GM12878 (cell line): ENCODE measurements at regions of chr7 and their contacts with region 1.

Region 1: GRCh38 chr7:135274495-135275268 is 41.0 kb downstream of the STRA8 start:
- DNase-seq: peak; percentile 45
- ATAC-seq: peak; percentile 98
- H3K4me3 ChIP-seq: no peak overlapping the region
- H3K27ac ChIP-seq: no peak overlapping the region
- H3K4me1 ChIP-seq: no peaks in the 10 kb centered on the region
- H3K27me3 ChIP-seq: no peaks in the 10 kb centered on the region
- CTCF ChIP-seq: peak; percentile 75 to 86 (median 81); a peak in 5 of 6 replicates
- EP300 ChIP-seq: no peak
- POLR2A ChIP-seq: no peak
- RAD21 ChIP-seq: peak; percentile 81

Region 2: GRCh38 chr7:134548877-134549276 is 725.8 kb before region 1 on chr7 and contains the start of gene AKR1B15:
- CTCF ChIA-PET with region 1: no interaction called
- POLR2A ChIA-PET with region 1: no interaction called
- RAD21 ChIA-PET with region 1: no interaction called
- SMC1A ChIA-PET with region 1: no interaction called
- in situ Hi-C with region 1: no loop called
- intact Hi-C with region 1: no loop called
- DNase-seq: peak; percentile 62
- ATAC-seq: peak; percentile 94
- H3K4me3 ChIP-seq: no peak within 1 kb of the TSS
- H3K27ac ChIP-seq: no peak within 1 kb of the TSS
- H3K4me1 ChIP-seq: peaks cover 21% of the 10 kb centered on the region
- H3K27me3 ChIP-seq: no peaks in the 10 kb centered on the region
- CTCF ChIP-seq: no peak; a peak in 1 of 6 replicates
- EP300 ChIP-seq: peak in 1 of 2 experiments; percentile 42; a peak in 1 of 4 replicates
- POLR2A ChIP-seq: no peak
- RAD21 ChIP-seq: no peak
- polyA plus RNA-seq, gene AKR1B15: not detected

Region 3: GRCh38 chr7:135175929-135176328 is 98.8 kb before region 1 on chr7:
- CTCF ChIA-PET with region 1: interaction called, 11 read pairs
- POLR2A ChIA-PET with region 1: no interaction called
- RAD21 ChIA-PET with region 1: interaction called, 7 read pairs
- SMC1A ChIA-PET with region 1: interaction called, 12 read pairs
- in situ Hi-C with region 1: no loop called
- intact Hi-C with region 1: no loop called
- DNase-seq: no peak
- ATAC-seq: no peak; the same call in 2 of the 3 replicates
- H3K4me3 ChIP-seq: peak overlapping the region; percentile 51
- H3K27ac ChIP-seq: no peak overlapping the region
- H3K4me1 ChIP-seq: peaks cover 5% of the 10 kb centered on the region
- H3K27me3 ChIP-seq: no peaks in the 10 kb centered on the region
- CTCF ChIP-seq: no peak
- EP300 ChIP-seq: no peak
- POLR2A ChIP-seq: no peak
- RAD21 ChIP-seq: no peak

Region 4: DNA sequence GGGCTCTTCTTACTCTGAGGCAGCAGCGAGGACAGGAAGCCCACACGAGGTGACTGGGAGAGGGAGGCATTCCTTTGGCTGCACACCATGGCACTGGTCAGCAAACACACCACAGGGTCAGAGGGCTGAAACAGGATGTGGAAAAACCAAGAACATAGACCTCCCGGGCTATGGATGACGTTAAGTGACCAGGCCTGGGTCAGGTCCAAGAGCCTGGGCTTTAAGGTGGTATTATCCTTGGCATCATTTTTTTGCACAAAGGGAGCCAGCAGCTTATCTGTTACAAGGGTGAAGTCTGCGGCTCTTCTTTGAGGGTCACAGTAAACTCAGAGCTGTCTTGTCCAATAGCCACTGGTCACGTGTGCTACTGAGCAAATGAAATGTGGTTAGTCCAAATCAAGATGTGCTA is 70.3 kb before region 1 on chr7:
- CTCF ChIA-PET with region 1: interaction called, 11 read pairs
- POLR2A ChIA-PET with region 1: no interaction called
- RAD21 ChIA-PET with region 1: interaction called, 3 read pairs
- SMC1A ChIA-PET with region 1: interaction called, 8 read pairs
- in situ Hi-C with region 1: no loop called
- intact Hi-C with region 1: no loop called
- DNase-seq: no peak
- ATAC-seq: no peak
- H3K4me3 ChIP-seq: no peak overlapping the region
- H3K27ac ChIP-seq: 0 out of 2 replicates have a peak overlapping the region, but pooled peaks have one; percentile 37
- H3K4me1 ChIP-seq: peaks cover 40% of the 10 kb centered on the region
- H3K27me3 ChIP-seq: no peaks in the 10 kb centered on the region
- CTCF ChIP-seq: no peak
- EP300 ChIP-seq: no peak
- POLR2A ChIP-seq: no peak
- RAD21 ChIP-seq: no peak

Region 5: GRCh38 chr7:135253898-135254771 is 20.5 kb before region 1 on chr7:
- CTCF ChIA-PET with region 1: interaction called, 72 read pairs
- POLR2A ChIA-PET with region 1: no interaction called
- RAD21 ChIA-PET with region 1: interaction called, 4 read pairs
- SMC1A ChIA-PET with region 1: interaction called, 8 read pairs
- in situ Hi-C with region 1: no loop called
- intact Hi-C with region 1: no loop called
- DNase-seq: no peak
- ATAC-seq: no peak
- H3K4me3 ChIP-seq: no peak overlapping the region
- H3K27ac ChIP-seq: no peak overlapping the region
- H3K4me1 ChIP-seq: peaks cover 9% of the 10 kb centered on the region; the same call in 1 of the 2 replicates
- H3K27me3 ChIP-seq: no peaks in the 10 kb centered on the region
- CTCF ChIP-seq: no peak
- EP300 ChIP-seq: no peak
- POLR2A ChIP-seq: no peak
- RAD21 ChIP-seq: no peak

Region 6: GRCh38 chr7:135291809-135292253 is 17.1 kb after region 1 on chr7:
- CTCF ChIA-PET with region 1: interaction called, 20 read pairs
- POLR2A ChIA-PET with region 1: no interaction called
- RAD21 ChIA-PET with region 1: no interaction called
- SMC1A ChIA-PET with region 1: interaction called, 3 read pairs
- in situ Hi-C with region 1: no loop called
- intact Hi-C with region 1: no loop called
- DNase-seq: no peak
- ATAC-seq: no peak
- H3K4me3 ChIP-seq: no peak overlapping the region
- H3K27ac ChIP-seq: no peak overlapping the region
- H3K4me1 ChIP-seq: no peaks in the 10 kb centered on the region
- H3K27me3 ChIP-seq: no peaks in the 10 kb centered on the region
- CTCF ChIP-seq: no peak
- EP300 ChIP-seq: no peak
- POLR2A ChIP-seq: no peak
- RAD21 ChIP-seq: no peak

Region 7: GRCh38 chr7:135645296-135645904 is 370.7 kb after region 1 on chr7:
- CTCF ChIA-PET with region 1: interaction called, 123 read pairs
- POLR2A ChIA-PET with region 1: no interaction called
- RAD21 ChIA-PET with region 1: interaction called, 24 read pairs
- SMC1A ChIA-PET with region 1: interaction called, 33 read pairs
- in situ Hi-C with region 1: loop called (anchors 5 kb)
- intact Hi-C with region 1: no loop called
- DNase-seq: no peak
- ATAC-seq: peak; percentile 83
- H3K4me3 ChIP-seq: no peak overlapping the region
- H3K27ac ChIP-seq: no peak overlapping the region
- H3K4me1 ChIP-seq: no peaks in the 10 kb centered on the region
- H3K27me3 ChIP-seq: no peaks in the 10 kb centered on the region
- CTCF ChIP-seq: peak; percentile 56 to 65 (median 62)
- EP300 ChIP-seq: no peak
- POLR2A ChIP-seq: no peak
- RAD21 ChIP-seq: peak; percentile 54

Region 8: GRCh38 chr7:135718794-135719437 is 444.2 kb after region 1 on chr7:
- CTCF ChIA-PET with region 1: no interaction called
- POLR2A ChIA-PET with region 1: no interaction called
- RAD21 ChIA-PET with region 1: no interaction called
- SMC1A ChIA-PET with region 1: no interaction called
- in situ Hi-C with region 1: no loop called
- intact Hi-C with region 1: no loop called
- DNase-seq: no peak
- ATAC-seq: no peak
- H3K4me3 ChIP-seq: no peak overlapping the region
- H3K27ac ChIP-seq: no peak overlapping the region
- H3K4me1 ChIP-seq: no peaks in the 10 kb centered on the region
- H3K27me3 ChIP-seq: no peaks in the 10 kb centered on the region; a peak in 1 of 4 replicates
- CTCF ChIP-seq: no peak
- EP300 ChIP-seq: no peak
- POLR2A ChIP-seq: no peak
- RAD21 ChIP-seq: no peak